ENCODE measurements at regions of chr10 and their contacts with region 1.

Region 1: DNA sequence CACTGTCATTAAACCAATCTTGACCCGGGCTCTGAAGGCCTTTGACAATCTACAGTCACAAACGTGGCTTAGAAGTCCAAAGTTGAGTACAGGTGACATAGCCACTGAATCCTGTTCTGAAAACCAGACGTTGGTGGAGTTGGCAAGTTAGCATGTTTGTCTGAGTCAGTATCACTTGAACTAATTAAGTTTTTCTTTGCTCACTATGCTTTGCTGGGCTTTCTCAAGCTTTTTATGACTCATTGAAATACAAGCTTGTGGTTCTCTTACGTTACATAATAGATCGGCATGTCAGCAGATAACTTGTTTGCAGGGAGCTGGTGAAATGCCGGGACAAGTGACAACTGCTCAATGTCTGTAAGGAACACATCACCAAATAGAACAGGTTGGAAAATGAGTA is 53.8 kb downstream of the ARL5B start:
- DNase-seq: peak; percentile 22 to 89
- H3K4me3 ChIP-seq: no peak overlapping the region
- H3K27ac ChIP-seq: 0 out of 2 replicates have a peak overlapping the region, but pooled peaks have one; percentile 23
- H3K4me1 ChIP-seq: peaks cover 8% of the 10 kb centered on the region; the same call in 1 of the 2 replicates
- H3K27me3 ChIP-seq: no peaks in the 10 kb centered on the region
- CTCF ChIP-seq: no peak

Region 2: DNA sequence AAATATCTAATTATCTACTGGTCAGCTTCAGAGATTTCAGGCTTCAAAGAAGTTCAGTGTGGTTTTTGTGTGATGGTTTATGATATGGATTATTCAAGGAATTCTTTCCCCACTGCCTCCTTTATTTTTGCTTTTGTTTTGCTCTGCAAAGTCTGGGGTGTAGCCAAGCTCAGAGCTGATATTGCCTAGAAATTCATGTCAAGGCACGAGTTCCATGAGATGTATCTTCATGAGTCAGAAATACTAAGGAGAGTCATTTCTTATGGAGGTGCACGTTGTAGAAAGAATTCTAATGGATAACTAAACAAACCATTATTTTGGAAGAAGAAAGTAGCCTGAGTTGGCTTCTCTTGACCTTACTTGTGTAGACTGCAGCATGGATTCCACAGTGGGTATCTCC is 1447.6 kb before region 1 on chr10:
- CTCF ChIA-PET with region 1: no interaction called
- POLR2A ChIA-PET with region 1: interaction called, 10 read pairs
- intact Hi-C with region 1: no loop called
- DNase-seq: no peak
- H3K4me3 ChIP-seq: no peak overlapping the region
- H3K27ac ChIP-seq: no peak overlapping the region
- H3K4me1 ChIP-seq: no peaks in the 10 kb centered on the region
- H3K27me3 ChIP-seq: no peaks in the 10 kb centered on the region; the same call in 1 of the 2 replicates
- CTCF ChIP-seq: no peak

Region 3: GRCh38 chr10:18056583-18056982 is 656.5 kb before region 1 on chr10:
- CTCF ChIA-PET with region 1: no interaction called
- POLR2A ChIA-PET with region 1: no interaction called
- intact Hi-C with region 1: no loop called
- DNase-seq: no peak
- H3K4me3 ChIP-seq: no peak overlapping the region
- H3K27ac ChIP-seq: no peak overlapping the region
- H3K4me1 ChIP-seq: no peaks in the 10 kb centered on the region
- H3K27me3 ChIP-seq: no peaks in the 10 kb centered on the region
- CTCF ChIP-seq: no peak

Region 4: GRCh38 chr10:18505456-18506118 is 207.5 kb before region 1 on chr10:
- CTCF ChIA-PET with region 1: no interaction called
- POLR2A ChIA-PET with region 1: no interaction called
- intact Hi-C with region 1: no loop called
- DNase-seq: no peak
- H3K4me3 ChIP-seq: no peak overlapping the region
- H3K27ac ChIP-seq: no peak overlapping the region
- H3K4me1 ChIP-seq: no peaks in the 10 kb centered on the region
- H3K27me3 ChIP-seq: no peaks in the 10 kb centered on the region; the same call in 1 of the 2 replicates
- CTCF ChIP-seq: no peak

Region 5: GRCh38 chr10:18625886-18626285 is 87.2 kb before region 1 on chr10:
- CTCF ChIA-PET with region 1: no interaction called
- POLR2A ChIA-PET with region 1: no interaction called
- intact Hi-C with region 1: no loop called
- DNase-seq: no peak
- H3K4me3 ChIP-seq: no peak overlapping the region
- H3K27ac ChIP-seq: no peak overlapping the region
- H3K4me1 ChIP-seq: no peaks in the 10 kb centered on the region
- H3K27me3 ChIP-seq: no peaks in the 10 kb centered on the region
- CTCF ChIP-seq: no peak

Region 6: GRCh38 chr10:18651324-18652007 is 61.6 kb before region 1 on chr10 and contains the start of gene NSUN6:
- CTCF ChIA-PET with region 1: no interaction called
- POLR2A ChIA-PET with region 1: no interaction called
- intact Hi-C with region 1: no loop called
- DNase-seq: peak; percentile 71 to 84
- H3K4me3 ChIP-seq: peak within 1 kb of the TSS; percentile 96
- H3K27ac ChIP-seq: peak within 1 kb of the TSS; percentile 66
- H3K4me1 ChIP-seq: peaks cover 9% of the 10 kb centered on the region
- H3K27me3 ChIP-seq: no peaks in the 10 kb centered on the region
- CTCF ChIP-seq: no peak
- total RNA-seq, gene NSUN6: 11.9 and 12.9 TPM in 2 replicates